ENCODE measurements at regions of chr17 and their contacts with region 1.

Region 1: DNA sequence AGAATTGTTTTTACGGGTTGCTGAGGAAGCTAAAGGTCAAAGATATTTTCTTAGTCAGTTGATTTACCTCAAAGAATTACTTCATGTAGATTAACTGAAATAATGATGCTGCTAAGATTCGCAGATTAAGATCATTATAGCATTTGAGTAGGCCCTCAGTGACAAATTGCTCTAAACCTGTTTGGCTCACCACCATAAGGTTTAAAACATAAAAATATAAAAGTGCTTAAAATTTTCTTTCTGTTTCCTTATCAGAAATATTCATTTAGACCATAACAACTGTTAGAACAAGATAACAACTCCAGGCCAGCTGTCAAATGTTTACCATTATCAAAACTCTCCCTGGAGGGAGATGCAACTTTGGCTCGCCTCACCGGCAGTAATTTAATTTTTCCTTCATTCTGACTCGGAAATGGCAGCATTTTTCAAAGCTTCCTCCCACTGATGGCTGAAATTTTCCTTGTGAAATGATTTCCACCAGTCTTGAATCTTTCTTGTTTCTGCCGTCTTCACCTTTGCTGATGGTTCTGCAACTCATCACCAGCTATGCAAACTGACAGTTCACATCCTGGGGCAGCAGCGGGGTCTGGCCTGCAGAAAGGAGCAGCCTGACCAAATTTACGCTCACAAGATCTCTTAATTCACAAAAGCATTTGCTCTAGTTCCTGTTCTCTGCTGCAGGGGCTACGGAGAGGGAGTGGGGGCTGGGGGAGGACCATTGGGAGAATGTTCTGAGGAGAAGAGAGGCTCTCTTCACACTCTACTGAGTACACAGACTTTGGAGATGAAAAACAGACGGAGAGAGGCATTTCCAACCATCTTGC is 254.7 kb upstream of the TBX2 start:
- DNase-seq: no peak
- H3K4me3 ChIP-seq: no peak overlapping the region
- CTCF ChIP-seq: no peak
- POLR2A ChIP-seq: no peak

Region 2: GRCh38 chr17:61088553-61088952 is 56.4 kb before region 1 on chr17:
- intact Hi-C with region 1: loop called (anchors 10 kb)
- DNase-seq: no peak
- H3K4me3 ChIP-seq: no peak overlapping the region
- CTCF ChIP-seq: no peak
- POLR2A ChIP-seq: no peak

Region 3: DNA sequence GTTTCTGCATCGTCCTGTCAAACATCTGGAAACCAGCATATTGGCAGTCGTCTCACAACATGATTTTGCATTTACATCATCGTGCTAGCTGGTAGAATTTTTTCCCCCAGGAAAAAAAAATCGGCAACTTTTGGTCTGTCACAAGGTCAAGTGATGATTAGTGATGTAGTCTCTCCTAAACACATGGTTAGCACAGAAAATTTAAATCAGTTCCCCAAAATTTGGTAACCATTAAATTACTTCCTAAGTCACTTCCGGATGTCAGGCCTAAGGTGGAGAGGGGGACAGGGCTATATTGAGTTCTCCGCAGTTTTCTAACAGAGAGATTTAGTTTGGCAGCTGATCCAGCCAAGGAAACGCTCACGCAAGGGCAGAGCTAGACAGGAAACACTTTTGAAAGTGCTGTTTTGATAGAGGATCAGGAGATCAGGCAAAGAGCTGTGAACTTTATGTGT is 16.3 kb before region 1 on chr17:
- intact Hi-C with region 1: no loop called
- DNase-seq: no peak
- H3K4me3 ChIP-seq: no peak overlapping the region
- CTCF ChIP-seq: no peak
- POLR2A ChIP-seq: no peak

Measured in lower leg skin (tissue), 4 donors.